ENCODE measurements at regions of chr5 and their contacts with region 1.

Region 1: DNA sequence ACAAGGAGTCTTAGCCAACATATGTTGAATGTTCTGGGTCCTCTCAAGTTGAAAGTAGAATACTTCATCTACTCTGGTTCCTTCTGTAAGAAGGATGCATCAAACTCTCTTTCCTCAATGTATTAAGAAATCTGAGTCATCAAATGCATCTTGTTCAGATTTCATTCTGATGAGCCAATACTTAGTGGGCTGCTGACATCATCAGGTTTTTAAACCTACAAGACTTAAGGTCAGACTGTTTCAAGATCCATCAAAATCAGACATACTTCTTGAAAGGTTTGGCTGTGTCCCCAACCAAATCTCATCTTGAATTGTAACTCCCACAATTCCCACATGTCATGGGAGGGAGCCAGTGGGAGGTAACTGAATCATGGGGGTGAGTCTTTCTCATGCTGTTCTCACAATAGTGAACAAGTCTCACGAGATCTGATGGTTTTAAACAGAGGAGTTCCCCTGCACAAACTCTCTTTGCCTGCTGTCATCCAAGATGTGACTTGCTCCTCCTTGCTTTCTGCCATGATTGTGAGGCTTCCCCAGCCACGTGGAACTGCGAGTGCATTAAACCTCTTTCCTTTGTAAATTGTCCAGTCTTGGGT is 168.8 kb downstream of the RAPGEF6 start:
- DNase-seq: no peak
- ATAC-seq: no peak
- H3K4me3 ChIP-seq: no peak overlapping the region
- H3K4me3 Mint-ChIP-seq: peak overlapping the region in 1 of 10 donors; percentile 12
- H3K27ac ChIP-seq: no peak overlapping the region
- H3K27ac Mint-ChIP-seq: peak overlapping the region in 6 of 9 donors; percentile 7 to 90 (median 60)
- H3K4me1 ChIP-seq: peaks cover 0 to 10% of the 10 kb centered on the region in 2 donors
- H3K4me1 Mint-ChIP-seq: peaks cover 11 to 80% (median 69%) of the 10 kb centered on the region in 7 donors
- H3K27me3 ChIP-seq: no peaks in the 10 kb centered on the region
- H3K27me3 Mint-ChIP-seq: no peaks in the 10 kb centered on the region

Region 2: GRCh38 chr5:130141659-130142320 is 1324.5 kb before region 1 on chr5:
- CTCF ChIA-PET with region 1: no interaction called
- POLR2A ChIA-PET with region 1: no interaction called
- intact Hi-C with region 1: no loop called
- DNase-seq: no peak
- ATAC-seq: no peak
- H3K4me3 ChIP-seq: no peak overlapping the region
- H3K4me3 Mint-ChIP-seq: no peak overlapping the region
- H3K27ac ChIP-seq: no peak overlapping the region
- H3K27ac Mint-ChIP-seq: no peak overlapping the region
- H3K4me1 ChIP-seq: no peaks in the 10 kb centered on the region
- H3K4me1 Mint-ChIP-seq: peaks cover 0 to 2% (median 0%) of the 10 kb centered on the region in 7 donors
- H3K27me3 ChIP-seq: no peaks in the 10 kb centered on the region
- H3K27me3 Mint-ChIP-seq: peaks cover 0 to 22% (median 3%) of the 10 kb centered on the region in 5 donors

Region 3: GRCh38 chr5:130885027-130885426 is 581.2 kb before region 1 on chr5:
- CTCF ChIA-PET with region 1: no interaction called
- POLR2A ChIA-PET with region 1: no interaction called
- intact Hi-C with region 1: no loop called
- DNase-seq: no peak
- ATAC-seq: no peak
- H3K4me3 ChIP-seq: no peak overlapping the region
- H3K4me3 Mint-ChIP-seq: no peak overlapping the region
- H3K27ac ChIP-seq: no peak overlapping the region
- H3K27ac Mint-ChIP-seq: no peak overlapping the region
- H3K4me1 ChIP-seq: no peaks in the 10 kb centered on the region
- H3K4me1 Mint-ChIP-seq: peaks cover 0 to 12% (median 8%) of the 10 kb centered on the region in 7 donors
- H3K27me3 ChIP-seq: no peaks in the 10 kb centered on the region
- H3K27me3 Mint-ChIP-seq: peaks cover 0 to 9% (median 5%) of the 10 kb centered on the region in 5 donors

Region 4: DNA sequence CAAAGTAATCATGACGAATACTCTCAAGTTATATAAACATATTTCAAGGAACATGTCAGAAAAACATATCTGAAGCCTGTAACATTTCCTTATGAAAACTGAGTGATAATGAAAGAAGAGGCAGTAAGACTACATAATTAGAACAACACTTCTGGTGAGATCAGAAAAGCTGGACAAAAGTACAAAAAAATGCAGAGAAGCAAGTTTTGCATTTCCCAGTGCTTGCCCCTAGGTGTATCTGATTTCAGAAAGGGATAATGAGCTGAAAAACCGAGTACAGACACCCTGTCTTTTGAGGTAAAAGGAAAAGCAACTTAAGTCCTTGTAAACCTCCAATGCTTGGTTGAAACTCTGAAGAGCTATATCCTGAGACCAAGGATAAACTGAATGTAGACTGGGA is 12.4 kb before region 1 on chr5:
- CTCF ChIA-PET with region 1: no interaction called
- POLR2A ChIA-PET with region 1: interaction called, 7 read pairs
- intact Hi-C with region 1: loop called in 1 of 2 experiments (anchors 2 kb)
- DNase-seq: no peak
- ATAC-seq: no peak
- H3K4me3 ChIP-seq: no peak overlapping the region
- H3K4me3 Mint-ChIP-seq: peak overlapping the region in 2 of 10 donors; percentile 5 to 16
- H3K27ac ChIP-seq: no peak overlapping the region
- H3K27ac Mint-ChIP-seq: peak overlapping the region in 8 of 9 donors; percentile 22 to 81 (median 68)
- H3K4me1 ChIP-seq: peaks cover 0 to 7% of the 10 kb centered on the region in 2 donors
- H3K4me1 Mint-ChIP-seq: peaks cover 5 to 57% (median 48%) of the 10 kb centered on the region in 7 donors
- H3K27me3 ChIP-seq: no peaks in the 10 kb centered on the region
- H3K27me3 Mint-ChIP-seq: no peaks in the 10 kb centered on the region